Mammary epithelial cell (primary cell): ENCODE measurements at regions of chr14 and their contacts with region 1.

Region 1: DNA sequence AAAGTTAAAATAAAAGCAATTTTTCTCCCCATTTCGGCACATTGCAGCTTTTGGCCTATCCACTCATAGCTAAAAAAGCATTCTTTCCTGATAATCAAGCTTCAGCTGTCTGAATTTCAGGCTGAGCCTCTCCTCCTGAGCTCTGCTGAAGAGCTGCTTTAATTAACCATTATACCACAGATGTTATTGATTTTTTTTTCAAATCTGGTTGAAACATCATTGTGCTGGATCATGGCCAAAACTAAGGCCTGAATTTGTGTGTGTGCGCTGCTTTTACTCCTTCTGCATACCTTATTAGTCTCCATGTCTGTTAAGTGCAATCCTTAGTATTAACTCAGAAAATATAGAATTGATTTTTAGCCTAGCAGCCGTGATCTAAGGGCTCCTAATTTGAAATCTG is 52.3 kb downstream of the MBIP start:
- DNase-seq: no peak
- H3K4me3 ChIP-seq: no peak overlapping the region
- H3K27ac ChIP-seq: no peak overlapping the region
- H3K4me1 ChIP-seq: no peaks in the 10 kb centered on the region
- H3K27me3 ChIP-seq: peaks cover 3% of the 10 kb centered on the region
- CTCF ChIP-seq: no peak

Region 2: GRCh38 chr14:36176524-36176923 is 91.6 kb before region 1 on chr14 and contains the start of gene PTCSC3:
- CTCF ChIA-PET with region 1: no interaction called
- dilution Hi-C with region 1: no loop called
- in situ Hi-C with region 1: no loop called
- intact Hi-C with region 1: no loop called
- DNase-seq: no peak
- H3K4me3 ChIP-seq: no peak within 1 kb of the TSS
- H3K27ac ChIP-seq: no peak within 1 kb of the TSS
- H3K4me1 ChIP-seq: no peaks in the 10 kb centered on the region
- H3K27me3 ChIP-seq: peaks cover 2% of the 10 kb centered on the region
- CTCF ChIP-seq: no peak
- total RNA-seq, gene PTCSC3: not detected

Region 3: DNA sequence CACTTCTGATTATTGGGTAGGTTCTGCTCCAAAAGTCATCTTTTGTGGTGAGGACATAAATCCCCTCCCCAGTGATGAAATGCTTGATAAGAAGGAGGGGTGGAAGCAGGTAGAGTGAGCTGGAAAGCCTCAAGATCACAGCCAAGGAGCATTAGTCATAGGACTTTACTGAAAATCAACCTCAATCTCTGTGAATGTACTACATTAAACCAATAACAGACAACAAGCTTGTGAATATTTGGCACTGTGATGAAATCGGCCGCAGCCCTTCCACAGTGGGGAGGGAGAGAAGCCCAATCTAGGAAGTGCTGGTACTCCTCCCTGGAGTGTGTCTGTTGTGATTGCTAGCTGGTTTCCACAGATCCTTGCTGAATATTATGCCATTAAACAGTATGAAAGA is 50.4 kb before region 1 on chr14:
- CTCF ChIA-PET with region 1: no interaction called
- dilution Hi-C with region 1: no loop called
- in situ Hi-C with region 1: no loop called
- intact Hi-C with region 1: no loop called
- DNase-seq: peak; percentile 58
- H3K4me3 ChIP-seq: no peak overlapping the region
- H3K27ac ChIP-seq: no peak overlapping the region
- H3K4me1 ChIP-seq: peaks cover 17% of the 10 kb centered on the region
- H3K27me3 ChIP-seq: no peaks in the 10 kb centered on the region
- CTCF ChIP-seq: no peak

Region 4: DNA sequence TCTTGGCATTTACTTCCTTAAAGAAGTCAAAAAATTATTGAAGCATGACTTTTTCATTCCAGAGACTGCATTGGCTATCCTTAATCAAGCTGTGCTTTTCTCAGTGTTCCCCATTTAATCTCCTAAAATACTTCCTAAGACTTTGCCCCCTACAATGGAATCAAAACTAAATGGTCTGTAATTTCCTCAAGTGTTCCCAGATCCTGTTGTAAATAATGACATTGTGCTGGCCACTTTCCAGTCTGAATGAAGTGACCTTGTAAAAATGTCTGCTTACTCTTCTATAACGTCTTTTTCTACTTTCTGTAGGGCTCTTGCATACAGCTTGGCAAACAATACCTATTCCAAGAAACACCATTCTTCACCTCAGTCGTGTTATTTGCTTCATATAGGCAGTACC is 97.6 kb after region 1 on chr14:
- CTCF ChIA-PET with region 1: no interaction called
- dilution Hi-C with region 1: loop called (anchors 5 kb)
- in situ Hi-C with region 1: no loop called
- intact Hi-C with region 1: no loop called
- DNase-seq: no peak
- H3K4me3 ChIP-seq: no peak overlapping the region
- H3K27ac ChIP-seq: no peak overlapping the region
- H3K4me1 ChIP-seq: no peaks in the 10 kb centered on the region
- H3K27me3 ChIP-seq: peaks cover 5% of the 10 kb centered on the region
- CTCF ChIP-seq: no peak